ENCODE measurements at regions of chr1 and their contacts with region 1.

Region 1: GRCh38 chr1:31938174-31938950 is at the start of gene PTP4A2:
- DNase-seq: peak; percentile 54 to 91 (median 79)
- ATAC-seq: peak; percentile 60
- H3K4me3 ChIP-seq: peak within 1 kb of the TSS; percentile 68 to 93
- H3K4me3 Mint-ChIP-seq: peak within 1 kb of the TSS; percentile 100
- H3K27ac ChIP-seq: peak within 1 kb of the TSS; percentile 57 to 85
- H3K27ac Mint-ChIP-seq: peak within 1 kb of the TSS; percentile 99
- H3K4me1 ChIP-seq: peaks cover 77% of the 10 kb centered on the region
- H3K4me1 Mint-ChIP-seq: peaks cover 70% of the 10 kb centered on the region
- H3K27me3 ChIP-seq: no peaks in the 10 kb centered on the region
- H3K27me3 Mint-ChIP-seq: no peaks in the 10 kb centered on the region
- CTCF ChIP-seq: peak; percentile 43
- total RNA-seq, gene PTP4A2: 257 to 278 TPM

Region 2: DNA sequence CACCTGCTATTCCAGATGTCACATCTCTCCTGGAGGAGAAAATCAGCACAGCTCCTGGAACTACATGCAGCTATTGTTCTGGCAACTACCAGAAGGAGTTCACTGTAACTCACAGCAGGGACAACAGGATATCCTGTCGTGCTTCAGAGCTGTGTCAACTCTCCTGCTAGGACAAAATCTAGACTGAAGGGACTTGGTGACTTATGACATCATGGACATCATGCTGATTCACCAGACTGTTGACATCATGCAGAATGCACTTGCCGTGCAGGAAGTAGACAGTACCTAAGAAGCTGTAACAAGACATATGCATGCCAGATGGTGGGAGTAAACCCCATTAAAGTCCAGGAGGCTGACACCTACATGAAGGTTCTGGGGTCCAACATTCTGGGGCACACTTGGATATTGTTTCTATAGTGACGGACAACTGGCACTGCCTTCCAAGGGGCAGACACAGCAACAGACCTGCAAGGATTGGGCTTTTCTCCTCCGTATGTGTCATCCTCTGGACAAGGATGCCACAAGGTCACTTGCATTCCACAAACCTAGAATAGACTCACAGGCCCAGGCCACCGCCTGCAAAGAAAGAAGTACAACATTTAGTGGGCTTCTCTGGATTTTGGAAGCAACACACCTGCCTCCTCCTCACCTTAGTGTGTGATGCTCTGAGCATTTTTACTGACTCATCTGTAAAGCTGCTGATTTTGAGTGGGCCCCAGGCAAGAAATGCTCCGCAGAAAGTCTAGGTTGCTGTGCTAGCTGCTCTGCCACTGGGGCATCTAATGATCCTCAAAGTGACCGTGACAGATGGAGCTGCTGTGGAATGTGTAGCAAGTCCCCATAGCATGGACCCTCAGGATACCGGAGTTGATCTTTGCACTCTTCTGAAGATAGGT is 1464.2 kb before region 1 on chr1:
- CTCF ChIA-PET with region 1: no interaction called
- POLR2A ChIA-PET with region 1: no interaction called
- intact Hi-C with region 1: no loop called
- DNase-seq: peak in 1 of 9 experiments; percentile 13
- ATAC-seq: no peak
- H3K4me3 ChIP-seq: no peak overlapping the region
- H3K4me3 Mint-ChIP-seq: no peak overlapping the region
- H3K27ac ChIP-seq: no peak overlapping the region
- H3K27ac Mint-ChIP-seq: no peak overlapping the region
- H3K4me1 ChIP-seq: no peaks in the 10 kb centered on the region
- H3K4me1 Mint-ChIP-seq: no peaks in the 10 kb centered on the region
- H3K27me3 ChIP-seq: no peaks in the 10 kb centered on the region
- H3K27me3 Mint-ChIP-seq: no peaks in the 10 kb centered on the region
- CTCF ChIP-seq: no peak

Region 3: DNA sequence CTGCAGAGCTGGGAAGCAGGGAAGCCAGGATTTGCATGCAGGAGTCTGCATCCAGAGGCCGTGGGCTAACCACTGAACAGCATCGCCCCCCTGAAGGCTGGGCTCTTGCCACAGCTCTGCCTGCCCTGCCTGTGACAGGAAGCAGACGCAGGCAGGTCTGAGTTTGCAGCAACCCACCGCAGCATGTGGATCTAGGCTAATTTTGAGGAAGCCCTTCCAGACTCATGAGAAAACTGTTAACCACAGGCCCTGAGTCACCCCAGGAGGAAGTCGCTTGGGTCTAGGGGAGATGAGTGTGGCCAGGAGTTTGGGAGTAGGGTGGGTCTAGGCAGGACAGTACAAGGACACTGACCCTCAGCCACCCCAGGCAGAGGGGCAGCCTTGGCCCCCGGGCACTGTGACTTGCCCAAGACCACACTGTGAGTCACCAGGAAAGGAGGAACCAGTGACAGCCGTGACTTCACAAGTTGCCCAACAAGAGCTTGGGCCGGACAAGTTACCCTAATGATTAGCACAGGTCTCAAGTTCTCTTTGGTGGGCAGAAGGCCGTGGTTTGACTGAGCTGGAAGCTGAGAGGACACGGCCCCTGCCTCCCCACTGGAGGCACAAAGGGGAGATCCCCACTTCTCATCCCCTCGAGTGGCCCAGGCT is 1181.7 kb before region 1 on chr1:
- CTCF ChIA-PET with region 1: no interaction called
- POLR2A ChIA-PET with region 1: no interaction called
- intact Hi-C with region 1: loop called in 1 of 2 experiments (anchors 10 kb)
- DNase-seq: peak; percentile 52 to 92 (median 80)
- ATAC-seq: peak; percentile 59
- H3K4me3 ChIP-seq: peak overlapping the region; percentile 70 to 87
- H3K4me3 Mint-ChIP-seq: peak overlapping the region; percentile 97
- H3K27ac ChIP-seq: peak overlapping the region; percentile 78 to 92
- H3K27ac Mint-ChIP-seq: peak overlapping the region; percentile 99
- H3K4me1 ChIP-seq: peaks cover 72% of the 10 kb centered on the region
- H3K4me1 Mint-ChIP-seq: peaks cover 86% of the 10 kb centered on the region
- H3K27me3 ChIP-seq: no peaks in the 10 kb centered on the region
- H3K27me3 Mint-ChIP-seq: no peaks in the 10 kb centered on the region
- CTCF ChIP-seq: no peak

Region 4: GRCh38 chr1:31831397-31832378 is 106.7 kb before region 1 on chr1:
- CTCF ChIA-PET with region 1: interaction called, 4 read pairs
- POLR2A ChIA-PET with region 1: interaction called, 10 read pairs
- intact Hi-C with region 1: loop called (anchors 2 to 5 kb)
- DNase-seq: peak in 1 of 9 experiments; percentile 34
- ATAC-seq: no peak
- H3K4me3 ChIP-seq: no peak overlapping the region
- H3K4me3 Mint-ChIP-seq: no peak overlapping the region
- H3K27ac ChIP-seq: no peak overlapping the region
- H3K27ac Mint-ChIP-seq: no peak overlapping the region
- H3K4me1 ChIP-seq: peaks cover 28% of the 10 kb centered on the region
- H3K4me1 Mint-ChIP-seq: peaks cover 32% of the 10 kb centered on the region
- H3K27me3 ChIP-seq: no peaks in the 10 kb centered on the region
- H3K27me3 Mint-ChIP-seq: no peaks in the 10 kb centered on the region
- CTCF ChIP-seq: no peak

Region 5: DNA sequence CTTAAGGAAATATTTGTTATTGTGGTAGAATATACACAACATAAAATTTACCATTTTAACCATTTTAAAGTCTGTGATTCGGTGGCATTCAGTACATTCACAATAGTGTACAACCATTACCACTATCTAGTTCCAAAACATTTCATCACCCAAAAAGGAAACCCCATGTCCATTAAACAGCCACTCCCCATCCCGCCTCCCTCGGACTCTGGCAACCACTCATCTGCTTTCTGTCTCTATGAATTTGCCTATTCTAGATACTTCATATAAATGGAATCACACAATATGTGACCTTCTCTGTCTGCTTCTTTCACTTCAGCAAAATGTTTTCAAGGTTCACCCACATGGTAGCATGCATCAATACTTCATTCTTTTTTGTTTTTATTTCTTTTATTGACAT is 51.5 kb before region 1 on chr1:
- CTCF ChIA-PET with region 1: no interaction called
- POLR2A ChIA-PET with region 1: interaction called, 8 read pairs
- intact Hi-C with region 1: loop called in 1 of 2 experiments (anchors 5 kb)
- DNase-seq: no peak
- ATAC-seq: no peak
- H3K4me3 ChIP-seq: no peak overlapping the region
- H3K4me3 Mint-ChIP-seq: no peak overlapping the region
- H3K27ac ChIP-seq: no peak overlapping the region
- H3K27ac Mint-ChIP-seq: no peak overlapping the region
- H3K4me1 ChIP-seq: peaks cover 20% of the 10 kb centered on the region
- H3K4me1 Mint-ChIP-seq: peaks cover 24% of the 10 kb centered on the region
- H3K27me3 ChIP-seq: no peaks in the 10 kb centered on the region
- H3K27me3 Mint-ChIP-seq: no peaks in the 10 kb centered on the region
- CTCF ChIP-seq: no peak

Region 6: DNA sequence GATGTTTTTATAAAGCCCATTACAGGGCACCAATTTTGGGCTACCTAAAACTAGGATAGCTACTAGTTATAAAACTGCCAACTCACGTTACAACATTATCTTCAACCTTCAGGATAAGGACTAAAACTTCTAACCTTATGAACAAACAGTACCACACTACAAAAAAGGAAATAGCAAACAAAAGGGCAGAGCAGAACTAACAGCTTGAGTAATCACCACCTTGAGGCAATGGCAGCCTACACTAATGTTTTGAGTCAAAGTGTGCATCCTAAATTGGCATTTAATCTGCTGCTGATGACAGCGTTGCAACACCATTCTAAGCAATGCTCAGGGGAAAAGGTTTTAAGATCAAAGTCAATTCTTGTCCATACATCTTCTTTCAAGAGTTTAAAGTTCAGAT is 27.4 kb before region 1 on chr1:
- CTCF ChIA-PET with region 1: interaction called, 12 read pairs
- POLR2A ChIA-PET with region 1: interaction called, 16 read pairs
- intact Hi-C with region 1: no loop called
- DNase-seq: no peak
- ATAC-seq: peak; percentile 38
- H3K4me3 ChIP-seq: no peak overlapping the region
- H3K4me3 Mint-ChIP-seq: peak overlapping the region; percentile 2
- H3K27ac ChIP-seq: peak overlapping the region in 1 of 2 experiments; percentile 0
- H3K27ac Mint-ChIP-seq: peak overlapping the region; percentile 64
- H3K4me1 ChIP-seq: peaks cover 23% of the 10 kb centered on the region
- H3K4me1 Mint-ChIP-seq: peaks cover 50% of the 10 kb centered on the region
- H3K27me3 ChIP-seq: no peaks in the 10 kb centered on the region
- H3K27me3 Mint-ChIP-seq: no peaks in the 10 kb centered on the region
- CTCF ChIP-seq: no peak

Region 7: DNA sequence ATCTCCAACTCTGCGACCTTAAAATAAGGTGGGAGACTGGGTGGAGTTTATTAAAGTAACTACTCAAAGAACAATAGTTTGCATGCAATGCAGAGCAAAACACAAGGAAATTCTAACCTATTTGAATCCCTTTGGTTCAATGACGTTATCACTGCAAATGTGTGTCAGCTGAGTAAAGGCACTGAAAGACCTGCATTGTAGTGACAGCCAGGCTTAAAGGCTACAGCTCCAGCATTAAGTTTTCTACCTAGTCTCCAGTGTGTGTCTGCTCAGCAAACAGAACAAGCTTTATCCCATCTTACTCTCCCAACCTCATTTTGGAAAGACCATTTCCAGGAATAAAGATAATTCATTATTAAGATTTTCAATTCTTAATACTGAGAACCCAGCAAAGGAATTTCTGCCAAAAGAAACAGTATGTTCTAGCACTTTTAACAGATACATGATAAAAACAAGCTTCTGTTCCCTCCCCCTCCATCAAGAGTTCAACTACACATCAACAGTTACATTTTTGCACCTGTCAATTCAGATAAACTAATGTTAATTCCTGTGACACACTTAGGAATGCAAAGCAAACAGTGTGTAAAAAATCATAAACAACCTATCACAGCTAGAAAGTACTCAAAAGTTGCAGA is 14.3 kb before region 1 on chr1:
- CTCF ChIA-PET with region 1: interaction called, 12 read pairs
- POLR2A ChIA-PET with region 1: interaction called, 9 read pairs
- intact Hi-C with region 1: loop called in 1 of 2 experiments (anchors 1 kb)
- DNase-seq: peak in 2 of 9 experiments; percentile 39 to 70
- ATAC-seq: peak; percentile 50
- H3K4me3 ChIP-seq: no peak overlapping the region
- H3K4me3 Mint-ChIP-seq: peak overlapping the region; percentile 69
- H3K27ac ChIP-seq: peak overlapping the region in 1 of 2 experiments; percentile 85
- H3K27ac Mint-ChIP-seq: peak overlapping the region; percentile 92
- H3K4me1 ChIP-seq: peaks cover 74% of the 10 kb centered on the region
- H3K4me1 Mint-ChIP-seq: peaks cover 81% of the 10 kb centered on the region
- H3K27me3 ChIP-seq: no peaks in the 10 kb centered on the region
- H3K27me3 Mint-ChIP-seq: no peaks in the 10 kb centered on the region
- CTCF ChIP-seq: no peak

Region 8: GRCh38 chr1:31955917-31956736 is 17.8 kb after region 1 on chr1:
- CTCF ChIA-PET with region 1: interaction called, 349 read pairs
- POLR2A ChIA-PET with region 1: interaction called, 29 read pairs
- intact Hi-C with region 1: loop called (anchors 2 kb)
- DNase-seq: peak; percentile 42 to 93 (median 72)
- ATAC-seq: peak; percentile 80
- H3K4me3 ChIP-seq: no peak overlapping the region
- H3K4me3 Mint-ChIP-seq: peak overlapping the region; percentile 42
- H3K27ac ChIP-seq: peak overlapping the region in 1 of 2 experiments; percentile 58
- H3K27ac Mint-ChIP-seq: peak overlapping the region; percentile 58
- H3K4me1 ChIP-seq: peaks cover 22% of the 10 kb centered on the region
- H3K4me1 Mint-ChIP-seq: peaks cover 43% of the 10 kb centered on the region
- H3K27me3 ChIP-seq: no peaks in the 10 kb centered on the region
- H3K27me3 Mint-ChIP-seq: no peaks in the 10 kb centered on the region
- CTCF ChIP-seq: no peak

Measured in CD8-positive, alpha-beta T cell (primary cell).